Cardiac septum (tissue), 1 donor: ENCODE measurements at regions of chr1 and their contacts with region 1.

Region 1: DNA sequence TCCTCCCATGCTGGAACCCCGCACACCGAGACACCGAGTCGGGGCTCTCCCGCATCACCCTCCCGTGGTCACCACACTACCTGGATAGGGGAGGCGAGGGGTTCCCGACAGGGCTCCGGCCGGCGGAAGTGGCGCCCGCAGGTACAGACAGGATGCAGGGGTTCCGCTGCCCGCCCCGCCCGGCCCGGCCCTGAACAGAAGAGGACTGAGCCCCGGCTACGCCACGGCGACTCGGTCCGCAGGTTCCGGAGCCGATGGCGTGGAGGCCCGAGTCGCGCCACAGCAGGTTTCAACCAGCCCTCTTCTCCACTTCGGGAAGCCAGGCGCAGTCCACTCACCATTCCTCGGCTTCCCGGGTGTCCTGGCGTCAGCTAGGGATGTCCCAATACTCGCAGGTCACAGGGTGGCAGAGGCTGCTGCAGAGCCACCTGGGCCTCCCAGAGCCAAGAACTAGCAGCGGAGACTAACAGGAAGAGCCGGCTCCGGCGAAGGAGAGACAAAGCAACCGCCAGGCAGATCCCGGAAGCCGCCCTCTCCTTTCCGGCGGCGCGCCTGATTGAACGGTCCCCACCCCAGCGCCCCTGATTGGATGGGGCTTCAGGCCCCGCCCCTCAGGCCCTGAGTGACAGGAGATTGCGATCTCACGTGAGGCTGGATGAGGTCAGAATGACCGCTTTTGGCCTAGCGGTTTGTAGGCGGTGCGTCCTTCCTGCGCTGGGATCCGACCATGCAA is at the start of gene ZNF669:
- DNase-seq: peak; percentile 97
- total RNA-seq, gene ZNF669: 3.1 TPM

Region 2: GRCh38 chr1:247078261-247079140 is 25.5 kb before region 1 on chr1 and contains the start of gene ZNF670:
- intact Hi-C with region 1: loop called (anchors 2 kb)
- DNase-seq: peak; percentile 96
- total RNA-seq, gene ZNF670: 0.75 TPM